GM12878 (cell line): ENCODE measurements at regions of chrX and their contacts with region 1.

Region 1: GRCh38 chrX:18886344-18887161 is 97.4 kb downstream of the PHKA2 start:
- DNase-seq: peak; percentile 66
- ATAC-seq: peak; percentile 87
- H3K4me3 ChIP-seq: peak overlapping the region; percentile 47
- H3K27ac ChIP-seq: peak overlapping the region; percentile 87
- H3K4me1 ChIP-seq: peaks cover 28% of the 10 kb centered on the region
- H3K27me3 ChIP-seq: no peaks in the 10 kb centered on the region
- CTCF ChIP-seq: peak; percentile 62 to 70 (median 69)
- EP300 ChIP-seq: no peak
- POLR2A ChIP-seq: 0 out of 2 replicates have a peak, but pooled peaks have one; percentile 34
- RAD21 ChIP-seq: peak; percentile 66

Region 2: DNA sequence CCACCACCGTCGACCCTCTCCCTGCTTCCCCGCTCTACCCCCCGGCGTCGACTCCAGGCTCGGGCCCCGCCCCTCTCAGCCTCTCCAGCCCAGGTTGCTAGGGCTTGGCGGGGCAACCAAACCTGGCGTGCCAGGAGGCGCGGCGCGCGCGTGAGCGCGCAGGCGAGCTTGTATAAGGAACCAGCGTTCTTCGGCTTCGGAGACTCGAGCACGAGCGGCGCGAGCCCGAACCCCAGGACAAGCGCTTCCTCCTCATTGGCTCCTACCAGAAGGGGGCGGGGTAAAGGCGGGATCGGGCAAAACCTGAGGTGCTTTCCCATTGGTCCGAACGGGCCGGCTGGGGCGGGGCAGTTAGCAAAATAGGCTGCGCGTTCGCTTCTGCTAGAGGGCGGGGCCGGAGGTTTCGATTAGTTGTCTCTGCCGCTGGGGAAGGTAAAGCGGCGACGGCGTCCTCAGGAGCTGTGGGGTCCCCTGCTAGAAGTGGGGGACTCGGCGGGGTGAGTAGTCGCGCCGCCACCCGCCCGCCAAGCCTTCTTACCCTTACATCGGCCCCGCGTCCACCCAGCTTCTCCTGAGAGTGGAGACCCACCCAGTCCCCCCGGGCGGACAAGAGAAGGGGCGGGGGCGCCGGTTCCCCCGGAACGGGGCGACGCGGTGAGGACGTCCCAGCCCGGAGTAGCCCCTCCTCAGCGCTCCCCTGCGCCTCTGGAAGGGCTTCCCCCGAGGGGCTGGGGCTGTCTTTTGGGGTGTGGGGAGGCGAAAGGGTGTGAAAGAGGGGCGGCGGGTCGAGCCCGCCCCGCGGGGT is 461.2 kb before region 1 on chrX and contains the start of gene CDKL5:
- CTCF ChIA-PET with region 1: interaction called, 4 read pairs
- POLR2A ChIA-PET with region 1: no interaction called
- RAD21 ChIA-PET with region 1: interaction called, 8 read pairs
- SMC1A ChIA-PET with region 1: interaction called, 4 read pairs
- in situ Hi-C with region 1: no loop called
- intact Hi-C with region 1: loop called (anchors 1 kb)
- DNase-seq: peak; percentile 75
- ATAC-seq: peak; percentile 95
- H3K4me3 ChIP-seq: peak within 1 kb of the TSS; percentile 64
- H3K27ac ChIP-seq: no peak within 1 kb of the TSS; the same call in 1 of the 2 replicates
- H3K4me1 ChIP-seq: peaks cover 2% of the 10 kb centered on the region; the same call in 1 of the 2 replicates
- H3K27me3 ChIP-seq: 0 out of 4 replicates have a peak, but pooled peaks cover 0 to 2% of the 10 kb centered on the region in 2 experiments
- CTCF ChIP-seq: no peak
- EP300 ChIP-seq: no peak
- POLR2A ChIP-seq: peak; percentile 67
- RAD21 ChIP-seq: no peak
- polyA plus RNA-seq, gene CDKL5: 1.4 to 2.3 TPM

Region 3: GRCh38 chrX:18769812-18770573 is 116.6 kb before region 1 on chrX:
- CTCF ChIA-PET with region 1: no interaction called
- POLR2A ChIA-PET with region 1: no interaction called
- RAD21 ChIA-PET with region 1: no interaction called
- SMC1A ChIA-PET with region 1: no interaction called
- in situ Hi-C with region 1: no loop called
- intact Hi-C with region 1: loop called (anchors 5 kb)
- DNase-seq: no peak
- ATAC-seq: peak; percentile 66
- H3K4me3 ChIP-seq: no peak overlapping the region
- H3K27ac ChIP-seq: no peak overlapping the region
- H3K4me1 ChIP-seq: no peaks in the 10 kb centered on the region
- H3K27me3 ChIP-seq: no peaks in the 10 kb centered on the region
- CTCF ChIP-seq: 0 out of 6 replicates have a peak, but pooled peaks of 1 of the 3 experiments have one; percentile 13
- EP300 ChIP-seq: no peak
- POLR2A ChIP-seq: no peak
- RAD21 ChIP-seq: no peak

Region 4: GRCh38 chrX:18855919-18856644 is 30.5 kb before region 1 on chrX:
- CTCF ChIA-PET with region 1: interaction called, 29 read pairs
- POLR2A ChIA-PET with region 1: interaction called, 25 read pairs
- RAD21 ChIA-PET with region 1: interaction called, 52 read pairs
- SMC1A ChIA-PET with region 1: interaction called, 52 read pairs
- in situ Hi-C with region 1: no loop called
- intact Hi-C with region 1: loop called (anchors 1 kb)
- DNase-seq: peak; percentile 90
- ATAC-seq: peak; percentile 94
- H3K4me3 ChIP-seq: no peak overlapping the region
- H3K27ac ChIP-seq: peak overlapping the region; percentile 96
- H3K4me1 ChIP-seq: peaks cover 19% of the 10 kb centered on the region
- H3K27me3 ChIP-seq: no peaks in the 10 kb centered on the region
- CTCF ChIP-seq: no peak
- EP300 ChIP-seq: peak; percentile 14 to 55; a peak in 1 of 4 replicates
- POLR2A ChIP-seq: no peak
- RAD21 ChIP-seq: peak; percentile 42; the same call in 1 of the 2 replicates

Region 5: DNA sequence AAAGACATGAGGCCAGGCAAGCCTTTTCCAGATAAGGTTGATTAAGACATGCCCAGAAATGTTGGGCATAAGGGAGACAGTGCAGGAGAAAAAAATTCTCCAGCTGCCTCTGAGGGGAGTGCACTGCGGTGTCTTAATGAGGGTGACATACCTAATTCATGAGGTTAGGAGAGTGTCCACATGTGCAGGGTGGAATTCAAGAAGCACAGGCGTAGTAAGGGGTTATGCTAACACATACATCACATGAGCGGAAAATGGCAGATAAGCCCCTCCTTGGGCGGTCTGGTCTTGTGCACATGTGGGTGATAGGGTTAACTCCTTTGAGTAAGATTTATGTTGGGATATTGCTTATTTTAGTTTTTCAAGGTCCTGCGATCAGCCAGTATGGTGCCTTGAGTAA is 25.0 kb before region 1 on chrX:
- CTCF ChIA-PET with region 1: interaction called, 29 read pairs
- POLR2A ChIA-PET with region 1: interaction called, 25 read pairs
- RAD21 ChIA-PET with region 1: interaction called, 52 read pairs
- SMC1A ChIA-PET with region 1: interaction called, 52 read pairs
- in situ Hi-C with region 1: no loop called
- intact Hi-C with region 1: loop called (anchors 1 kb)
- DNase-seq: no peak
- ATAC-seq: no peak
- H3K4me3 ChIP-seq: no peak overlapping the region
- H3K27ac ChIP-seq: no peak overlapping the region
- H3K4me1 ChIP-seq: peaks cover 4% of the 10 kb centered on the region; the same call in 1 of the 2 replicates
- H3K27me3 ChIP-seq: no peaks in the 10 kb centered on the region
- CTCF ChIP-seq: no peak
- EP300 ChIP-seq: no peak
- POLR2A ChIP-seq: no peak
- RAD21 ChIP-seq: no peak